Ascending aorta (tissue), 2 donors: ENCODE measurements at regions of chr3 and their contacts with region 1.

Region 1: GRCh38 chr3:71050538-71051258 is 532.8 kb downstream of the FOXP1 start:
- DNase-seq: no peak
- H3K4me3 ChIP-seq: no peak overlapping the region
- H3K27ac ChIP-seq: peak overlapping the region; percentile 37 to 45
- H3K4me1 ChIP-seq: peaks cover 4 to 86% of the 10 kb centered on the region in 2 donors
- H3K27me3 ChIP-seq: no peaks in the 10 kb centered on the region
- CTCF ChIP-seq: no peak

Region 2: DNA sequence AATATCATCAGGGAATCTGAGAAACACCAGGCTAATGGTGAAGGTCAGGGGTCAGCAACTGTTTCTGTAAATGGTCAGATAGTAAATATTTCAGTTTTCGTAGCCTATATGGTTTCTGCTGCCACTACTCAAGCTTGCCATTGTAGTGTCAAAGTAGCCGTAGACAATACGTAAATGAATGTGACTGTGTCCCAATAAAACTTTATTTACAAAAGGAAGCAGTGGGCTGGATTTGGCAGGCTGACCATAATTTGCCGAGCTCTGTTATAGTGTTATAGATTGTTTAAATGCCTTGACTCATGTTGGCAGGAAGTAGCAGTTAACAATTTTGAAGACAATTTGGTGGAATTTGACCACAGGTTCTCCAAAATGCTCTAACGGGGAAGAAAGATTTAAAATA is 15.4 kb before region 1 on chr3:
- intact Hi-C with region 1: loop called (anchors 2 kb)
- DNase-seq: no peak
- H3K4me3 ChIP-seq: no peak overlapping the region
- H3K27ac ChIP-seq: peak overlapping the region in 1 of 2 donors; percentile 16
- H3K4me1 ChIP-seq: peaks cover 4 to 39% of the 10 kb centered on the region in 2 donors
- H3K27me3 ChIP-seq: no peaks in the 10 kb centered on the region
- CTCF ChIP-seq: no peak

Region 3: GRCh38 chr3:71515636-71516365 is 465.1 kb after region 1 on chr3:
- intact Hi-C with region 1: no loop called
- DNase-seq: no peak
- H3K4me3 ChIP-seq: peak overlapping the region in 1 of 2 donors; percentile 9
- H3K27ac ChIP-seq: peak overlapping the region in 1 of 2 donors; percentile 10
- H3K4me1 ChIP-seq: peaks cover 0 to 18% of the 10 kb centered on the region in 2 donors
- H3K27me3 ChIP-seq: no peaks in the 10 kb centered on the region
- CTCF ChIP-seq: no peak